Naive thymus-derived CD4-positive, alpha-beta T cell (primary cell): ENCODE measurements at regions of chr11 and their contacts with region 1.

Region 1: DNA sequence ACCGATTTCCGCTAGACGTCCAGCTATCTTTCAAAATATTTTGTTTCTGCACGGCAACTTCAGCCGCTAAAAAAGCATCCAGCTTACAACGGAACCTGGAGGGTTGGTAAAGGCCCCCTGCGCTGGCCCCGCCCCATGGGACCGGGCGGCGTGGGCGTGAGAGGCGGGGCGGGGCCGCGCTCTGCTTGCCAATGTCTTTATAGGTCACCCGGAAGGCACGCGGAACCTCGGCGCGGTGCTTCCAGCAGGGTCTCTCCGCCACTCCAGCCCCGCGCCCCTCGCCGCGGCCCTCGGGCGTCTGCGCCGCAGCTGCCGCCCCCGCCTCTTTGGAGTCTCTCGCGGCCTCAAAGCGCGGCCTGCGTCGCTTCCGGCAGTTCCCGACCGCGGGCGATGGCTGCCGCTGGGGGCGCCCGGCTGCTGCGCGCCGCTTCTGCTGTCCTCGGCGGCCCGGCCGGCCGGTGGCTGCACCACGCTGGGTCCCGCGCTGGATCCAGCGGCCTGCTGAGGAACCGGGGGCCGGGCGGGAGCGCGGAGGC is at the start of gene FDX1:
- DNase-seq: peak; percentile 74 to 90 (median 82)
- ATAC-seq: peak; percentile 90
- H3K4me3 ChIP-seq: peak within 1 kb of the TSS; percentile 91
- H3K4me3 Mint-ChIP-seq: peak within 1 kb of the TSS; percentile 88 to 98 (median 98)
- H3K27ac ChIP-seq: peak within 1 kb of the TSS; percentile 87
- H3K27ac Mint-ChIP-seq: peak within 1 kb of the TSS; percentile 92 to 98 (median 97)
- H3K4me1 ChIP-seq: peaks cover 17 to 18% of the 10 kb centered on the region in 2 donors
- H3K4me1 Mint-ChIP-seq: peaks cover 19 to 53% (median 43%) of the 10 kb centered on the region in 7 donors
- H3K27me3 ChIP-seq: no peaks in the 10 kb centered on the region
- H3K27me3 Mint-ChIP-seq: no peaks in the 10 kb centered on the region
- total RNA-seq, gene FDX1: 7.7 to 11.2 (median 10.8) TPM

Region 2: DNA sequence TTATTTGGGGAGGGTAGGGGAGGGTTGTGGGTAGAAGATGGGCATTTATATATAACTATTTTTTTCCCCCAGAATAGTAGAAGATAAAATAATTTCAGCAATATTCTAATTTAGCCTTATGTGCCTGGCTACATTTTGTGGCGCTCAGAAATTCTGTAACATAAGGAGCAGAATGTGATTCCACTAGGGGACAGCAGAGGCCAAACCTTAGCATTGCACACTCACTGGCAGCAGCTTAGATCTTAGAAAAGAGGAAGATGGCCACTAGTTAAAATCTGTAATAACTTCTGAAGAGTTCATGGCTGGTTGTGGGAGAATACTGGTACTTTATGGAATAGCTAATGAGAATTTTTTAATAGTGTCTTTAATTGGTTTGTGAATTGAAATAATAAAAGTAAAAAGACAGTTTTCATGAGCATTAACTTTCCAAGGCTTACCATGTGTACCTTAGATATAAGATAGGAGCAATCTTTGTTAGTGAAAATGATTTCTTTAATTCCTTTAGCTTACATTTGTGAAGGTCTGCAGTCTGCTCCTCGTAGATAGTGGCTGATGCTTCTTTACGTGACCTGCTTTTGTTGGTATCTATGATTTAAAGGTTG is 1731.8 kb before region 1 on chr11:
- CTCF ChIA-PET with region 1: no interaction called
- POLR2A ChIA-PET with region 1: no interaction called
- intact Hi-C with region 1: loop called in 1 of 2 experiments (anchors 10 kb)
- DNase-seq: peak in 6 of 9 donors; percentile 7 to 37 (median 24)
- ATAC-seq: peak; percentile 79
- H3K4me3 ChIP-seq: no peak overlapping the region
- H3K4me3 Mint-ChIP-seq: no peak overlapping the region
- H3K27ac ChIP-seq: no peak overlapping the region
- H3K27ac Mint-ChIP-seq: no peak overlapping the region
- H3K4me1 ChIP-seq: no peaks in the 10 kb centered on the region
- H3K4me1 Mint-ChIP-seq: no peaks in the 10 kb centered on the region
- H3K27me3 ChIP-seq: no peaks in the 10 kb centered on the region
- H3K27me3 Mint-ChIP-seq: no peaks in the 10 kb centered on the region

Region 3: DNA sequence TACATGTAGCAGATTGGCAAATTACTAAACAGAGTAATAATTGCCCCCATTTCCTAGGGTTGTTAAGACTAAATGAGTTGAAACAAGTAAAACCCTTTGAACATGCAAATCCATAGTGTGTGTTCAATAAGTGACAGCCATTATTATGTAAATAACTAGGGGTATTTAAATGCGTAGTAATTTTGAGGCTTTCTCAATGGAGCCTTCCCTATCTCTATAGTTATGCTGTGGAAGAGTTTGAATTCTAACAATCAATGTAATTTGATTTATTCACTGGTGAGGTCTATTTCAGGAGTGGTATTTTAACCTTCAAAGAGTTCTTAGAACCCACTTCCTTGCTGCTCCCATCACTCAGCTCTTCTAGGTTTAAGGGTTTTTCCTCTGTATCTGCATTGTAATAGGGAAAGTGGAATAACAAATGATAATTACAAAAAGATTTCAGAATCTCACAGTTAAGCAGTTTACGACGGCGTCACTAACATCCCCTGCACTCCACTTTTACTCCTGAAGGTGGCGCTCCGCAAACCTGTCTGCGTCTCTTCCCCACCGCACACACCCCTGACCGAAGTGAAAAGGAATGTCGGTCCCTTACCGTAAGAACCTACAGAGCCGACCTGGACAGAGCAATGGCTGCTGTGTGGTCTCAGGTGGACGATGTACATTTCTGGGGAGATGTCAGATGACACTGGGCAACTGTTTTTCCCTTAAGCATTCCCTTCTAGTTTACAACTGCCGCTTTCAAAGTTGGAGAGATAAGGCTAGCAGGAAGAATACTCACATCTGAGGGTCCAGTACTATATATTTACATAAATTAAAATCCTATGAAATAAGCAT is 255.8 kb before region 1 on chr11:
- CTCF ChIA-PET with region 1: interaction called, 3 read pairs
- POLR2A ChIA-PET with region 1: no interaction called
- intact Hi-C with region 1: loop called (anchors 1 kb)
- DNase-seq: peak in 8 of 9 donors; percentile 22 to 65 (median 44)
- ATAC-seq: peak; percentile 87
- H3K4me3 ChIP-seq: peak overlapping the region; percentile 17
- H3K4me3 Mint-ChIP-seq: peak overlapping the region; percentile 40 to 80 (median 62)
- H3K27ac ChIP-seq: no peak overlapping the region
- H3K27ac Mint-ChIP-seq: no peak overlapping the region
- H3K4me1 ChIP-seq: no peaks in the 10 kb centered on the region
- H3K4me1 Mint-ChIP-seq: peaks cover 0 to 8% (median 7%) of the 10 kb centered on the region in 7 donors
- H3K27me3 ChIP-seq: no peaks in the 10 kb centered on the region
- H3K27me3 Mint-ChIP-seq: peaks cover 6 to 34% (median 15%) of the 10 kb centered on the region in 5 donors

Region 4: DNA sequence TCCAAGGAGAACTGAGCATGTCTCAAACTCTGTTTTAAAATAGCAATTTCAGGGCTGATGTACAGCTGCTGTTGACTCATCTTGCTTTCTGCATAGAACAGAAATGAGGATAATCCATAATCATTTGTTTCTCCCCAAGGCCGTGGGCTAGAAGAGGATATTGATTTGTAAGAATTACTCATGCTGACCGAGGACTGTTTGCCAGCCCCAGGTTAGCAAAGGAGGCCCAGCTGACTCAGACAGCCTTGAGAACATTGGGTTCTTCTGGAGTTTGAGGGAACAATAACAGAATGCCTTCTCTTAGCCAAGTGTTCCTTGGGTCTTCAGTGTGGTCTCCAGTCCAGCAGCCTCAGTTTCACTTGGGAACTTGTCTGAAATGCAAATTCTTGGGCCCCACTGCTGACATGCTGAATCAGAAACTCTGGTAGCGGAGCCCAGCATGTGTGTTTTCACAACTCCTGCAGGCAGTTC is 244.6 kb before region 1 on chr11:
- CTCF ChIA-PET with region 1: no interaction called
- POLR2A ChIA-PET with region 1: no interaction called
- intact Hi-C with region 1: no loop called
- DNase-seq: no peak
- ATAC-seq: no peak
- H3K4me3 ChIP-seq: no peak overlapping the region
- H3K4me3 Mint-ChIP-seq: no peak overlapping the region
- H3K27ac ChIP-seq: no peak overlapping the region
- H3K27ac Mint-ChIP-seq: no peak overlapping the region
- H3K4me1 ChIP-seq: no peaks in the 10 kb centered on the region
- H3K4me1 Mint-ChIP-seq: no peaks in the 10 kb centered on the region
- H3K27me3 ChIP-seq: no peaks in the 10 kb centered on the region
- H3K27me3 Mint-ChIP-seq: peaks cover 0 to 16% (median 5%) of the 10 kb centered on the region in 5 donors

Region 5: GRCh38 chr11:110376711-110377324 is 53.0 kb before region 1 on chr11:
- CTCF ChIA-PET with region 1: interaction called, 5 read pairs
- POLR2A ChIA-PET with region 1: interaction called, 3 read pairs
- intact Hi-C with region 1: loop called (anchors 1 kb)
- DNase-seq: peak in 7 of 9 donors; percentile 13 to 45 (median 22)
- ATAC-seq: peak; percentile 68
- H3K4me3 ChIP-seq: no peak overlapping the region
- H3K4me3 Mint-ChIP-seq: no peak overlapping the region
- H3K27ac ChIP-seq: no peak overlapping the region
- H3K27ac Mint-ChIP-seq: no peak overlapping the region
- H3K4me1 ChIP-seq: no peaks in the 10 kb centered on the region
- H3K4me1 Mint-ChIP-seq: peaks cover 0 to 27% (median 5%) of the 10 kb centered on the region in 7 donors
- H3K27me3 ChIP-seq: no peaks in the 10 kb centered on the region
- H3K27me3 Mint-ChIP-seq: peaks cover 0 to 6% (median 4%) of the 10 kb centered on the region in 5 donors

Region 6: GRCh38 chr11:111446404-111447111 is 1016.8 kb after region 1 on chr11:
- CTCF ChIA-PET with region 1: no interaction called
- POLR2A ChIA-PET with region 1: no interaction called
- intact Hi-C with region 1: loop called in 1 of 2 experiments (anchors 5 kb)
- DNase-seq: peak; percentile 35 to 91 (median 81)
- ATAC-seq: peak; percentile 99
- H3K4me3 ChIP-seq: no peak overlapping the region
- H3K4me3 Mint-ChIP-seq: peak overlapping the region in 8 of 10 donors; percentile 11 to 68 (median 50)
- H3K27ac ChIP-seq: no peak overlapping the region
- H3K27ac Mint-ChIP-seq: peak overlapping the region; percentile 34 to 93 (median 82)
- H3K4me1 ChIP-seq: peaks cover 7 to 13% of the 10 kb centered on the region in 2 donors
- H3K4me1 Mint-ChIP-seq: peaks cover 15 to 21% (median 17%) of the 10 kb centered on the region in 7 donors
- H3K27me3 ChIP-seq: no peaks in the 10 kb centered on the region
- H3K27me3 Mint-ChIP-seq: peaks cover 0 to 9% (median 0%) of the 10 kb centered on the region in 5 donors

Region 7: DNA sequence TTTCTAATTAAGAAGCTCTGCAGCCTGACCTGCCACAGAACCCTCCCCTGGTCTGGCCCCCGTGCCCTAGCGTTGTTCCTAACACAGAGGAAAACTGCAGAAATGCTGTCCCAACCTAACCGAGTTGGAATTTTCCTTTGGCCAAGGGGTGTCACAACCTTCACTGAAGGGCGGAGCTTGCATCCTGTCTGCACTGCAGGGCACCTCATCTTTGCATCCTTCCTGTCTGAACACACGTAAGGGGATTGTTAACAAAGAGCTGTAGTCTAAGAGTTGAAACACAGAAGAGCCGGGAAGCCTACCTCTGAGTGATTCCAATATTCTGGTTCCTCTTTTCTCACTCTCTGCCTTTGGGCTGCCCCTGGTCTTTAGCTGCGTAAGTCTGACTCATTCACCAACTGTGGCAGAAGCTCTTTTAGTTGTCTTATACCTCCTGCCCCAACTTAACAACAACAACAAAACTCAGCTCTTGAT is 1508.9 kb after region 1 on chr11:
- CTCF ChIA-PET with region 1: no interaction called
- POLR2A ChIA-PET with region 1: no interaction called
- intact Hi-C with region 1: loop called in 1 of 2 experiments (anchors 10 kb)
- DNase-seq: peak in 6 of 9 donors; percentile 18 to 38 (median 27)
- ATAC-seq: peak; percentile 73
- H3K4me3 ChIP-seq: no peak overlapping the region
- H3K4me3 Mint-ChIP-seq: peak overlapping the region; percentile 59 to 95 (median 78)
- H3K27ac ChIP-seq: peak overlapping the region; percentile 49
- H3K27ac Mint-ChIP-seq: peak overlapping the region; percentile 67 to 96 (median 84)
- H3K4me1 ChIP-seq: peaks cover 4 to 29% of the 10 kb centered on the region in 2 donors
- H3K4me1 Mint-ChIP-seq: peaks cover 16 to 48% (median 32%) of the 10 kb centered on the region in 7 donors
- H3K27me3 ChIP-seq: no peaks in the 10 kb centered on the region
- H3K27me3 Mint-ChIP-seq: no peaks in the 10 kb centered on the region